SK-N-SH (cell line): ENCODE measurements at regions of chr17 and their contacts with region 1.

Region 1: GRCh38 chr17:4249452-4250029 is 14.2 kb downstream of the ANKFY1 start:
- DNase-seq: peak; percentile 58
- H3K4me3 ChIP-seq: no peak overlapping the region
- H3K27ac ChIP-seq: no peak overlapping the region
- H3K4me1 ChIP-seq: no peaks in the 10 kb centered on the region; a peak in 1 of 4 replicates
- H3K27me3 ChIP-seq: no peaks in the 10 kb centered on the region
- CTCF ChIP-seq: peak; percentile 64
- EP300 ChIP-seq: no peak
- RAD21 ChIP-seq: peak; percentile 48

Region 2: GRCh38 chr17:4175921-4176807 is 73.4 kb before region 1 on chr17:
- CTCF ChIA-PET with region 1: no interaction called
- POLR2A ChIA-PET with region 1: no interaction called
- DNase-seq: no peak
- H3K4me3 ChIP-seq: no peak overlapping the region
- H3K27ac ChIP-seq: no peak overlapping the region
- H3K4me1 ChIP-seq: no peaks in the 10 kb centered on the region
- H3K27me3 ChIP-seq: no peaks in the 10 kb centered on the region
- CTCF ChIP-seq: no peak
- EP300 ChIP-seq: no peak
- RAD21 ChIP-seq: no peak

Region 3: DNA sequence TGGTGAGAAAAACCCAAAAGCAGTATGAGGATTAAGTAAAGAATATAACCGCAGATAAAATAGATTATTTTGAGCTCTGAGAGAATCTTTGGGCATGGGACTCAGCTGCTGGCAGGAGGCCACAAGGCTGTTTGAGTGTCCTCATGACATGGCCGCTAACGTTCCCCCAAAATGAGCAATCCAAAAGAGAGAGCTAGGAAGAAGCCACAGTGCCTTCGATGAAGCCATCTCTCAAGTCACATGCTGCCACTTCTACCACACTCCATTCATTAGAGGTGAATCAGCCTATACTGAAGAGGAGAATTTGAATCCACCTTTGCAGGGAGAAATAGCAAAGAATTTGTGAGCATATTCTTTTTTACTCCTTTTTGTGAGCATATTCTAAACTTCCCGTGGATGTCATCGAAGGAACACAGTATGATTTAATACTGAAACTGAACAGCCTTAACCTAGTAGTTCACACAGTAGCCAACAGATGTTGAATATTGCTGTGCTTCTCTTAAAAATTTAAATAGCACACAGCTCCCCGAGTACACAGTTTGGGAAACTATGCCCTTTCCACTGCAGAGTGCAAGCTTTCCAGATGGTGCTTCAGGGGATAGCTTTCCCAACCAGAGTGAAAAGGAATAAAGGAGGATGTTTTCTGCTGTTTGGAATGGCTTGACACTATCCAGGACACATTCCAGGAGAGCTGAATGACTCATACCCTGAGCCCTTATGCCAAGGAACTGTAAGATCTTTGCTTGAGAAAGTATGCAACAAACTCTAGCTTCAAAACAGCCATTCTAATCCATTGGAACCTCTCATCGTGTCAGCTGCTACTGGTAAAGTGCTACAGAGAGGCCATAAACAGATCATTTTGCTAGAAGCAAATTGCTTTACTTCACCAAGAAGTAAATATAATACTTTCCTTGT is 19.7 kb before region 1 on chr17:
- CTCF ChIA-PET with region 1: interaction called, 13 read pairs
- POLR2A ChIA-PET with region 1: interaction called, 3 read pairs
- DNase-seq: no peak
- H3K4me3 ChIP-seq: peak overlapping the region in 1 of 2 experiments; percentile 17; a peak in 1 of 4 replicates
- H3K27ac ChIP-seq: peak overlapping the region; percentile 88 to 98
- H3K4me1 ChIP-seq: peaks cover 3 to 26% of the 10 kb centered on the region in 2 experiments
- H3K27me3 ChIP-seq: no peaks in the 10 kb centered on the region
- CTCF ChIP-seq: no peak
- EP300 ChIP-seq: peak in 1 of 2 experiments; percentile 87; a peak in 2 of 4 replicates
- RAD21 ChIP-seq: no peak

Region 4: GRCh38 chr17:4236456-4236855 is 13.1 kb before region 1 on chr17:
- CTCF ChIA-PET with region 1: interaction called, 32 read pairs
- POLR2A ChIA-PET with region 1: no interaction called
- DNase-seq: peak; percentile 24
- H3K4me3 ChIP-seq: no peak overlapping the region
- H3K27ac ChIP-seq: peak overlapping the region in 1 of 2 experiments; percentile 98; a peak in 3 of 4 replicates
- H3K4me1 ChIP-seq: peaks cover 3 to 31% of the 10 kb centered on the region in 2 experiments; a peak in 3 of 4 replicates
- H3K27me3 ChIP-seq: no peaks in the 10 kb centered on the region
- CTCF ChIP-seq: no peak
- EP300 ChIP-seq: no peak
- RAD21 ChIP-seq: no peak

Region 5: DNA sequence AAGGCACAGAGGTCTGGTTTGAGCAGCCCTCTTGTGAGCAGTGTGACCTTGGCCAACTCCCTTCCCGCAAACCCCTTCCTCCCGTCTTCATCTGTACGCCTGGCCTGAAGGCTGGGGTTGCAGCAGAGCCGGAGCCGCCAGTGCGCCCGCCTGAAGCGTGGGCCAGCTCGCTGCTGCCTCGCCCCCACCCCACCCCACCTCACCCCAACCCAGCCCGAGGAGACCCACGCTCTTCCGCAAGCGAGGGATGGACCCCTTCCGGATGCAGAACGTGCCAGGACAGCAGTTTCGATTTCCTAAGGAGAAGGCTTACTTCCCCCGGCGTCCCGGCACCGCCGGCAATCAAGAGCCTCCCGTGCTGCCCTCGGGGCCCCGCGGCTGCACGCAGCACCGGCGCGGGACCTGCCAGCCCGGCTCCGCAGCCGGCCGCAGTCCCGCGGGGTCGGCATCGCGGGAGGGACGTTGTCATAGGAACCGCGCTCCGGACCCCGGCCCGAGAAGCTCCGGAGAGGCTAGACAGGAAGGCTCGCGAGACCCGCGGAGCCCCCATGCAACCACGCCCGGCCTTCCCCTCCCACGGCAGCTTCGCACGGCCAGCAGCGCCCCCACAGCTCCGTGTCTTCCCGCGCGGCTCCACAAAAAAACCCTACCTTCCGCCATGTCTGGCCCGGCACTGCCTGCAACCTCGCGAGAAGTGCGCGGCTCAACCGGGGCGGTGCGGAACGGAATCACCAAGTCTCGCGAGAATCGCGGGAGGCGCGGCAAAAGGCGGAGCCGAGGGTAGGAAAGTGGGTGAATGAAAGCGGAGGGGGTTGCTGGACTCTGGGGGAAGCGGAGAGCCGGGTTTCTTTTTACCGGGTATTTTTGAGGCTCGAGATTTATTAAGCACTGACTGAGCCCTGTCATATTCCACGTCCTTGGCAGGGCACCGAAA is 14.0 kb after region 1 on chr17 and contains the start of gene ANKFY1:
- CTCF ChIA-PET with region 1: interaction called, 39 read pairs
- POLR2A ChIA-PET with region 1: no interaction called
- DNase-seq: peak; percentile 97
- H3K4me3 ChIP-seq: peak within 1 kb of the TSS; percentile 78 to 95
- H3K27ac ChIP-seq: peak within 1 kb of the TSS; percentile 79 to 86
- H3K4me1 ChIP-seq: peaks cover 5 to 20% of the 10 kb centered on the region in 2 experiments; a peak in 3 of 4 replicates
- H3K27me3 ChIP-seq: no peaks in the 10 kb centered on the region
- CTCF ChIP-seq: peak; percentile 35; the same call in 1 of the 2 replicates
- EP300 ChIP-seq: no peak; a peak in 1 of 4 replicates
- RAD21 ChIP-seq: no peak
- polyA plus RNA-seq, gene ANKFY1: 26.9 and 29.6 TPM in 2 replicates